K562 (cell line): ENCODE measurements at regions of chr6 and their contacts with region 1.

Region 1: GRCh38 chr6:37566111-37566949 is 66.6 kb upstream of the CCDC167 start:
- DNase-seq: peak; percentile 70 to 89 (median 87)
- ATAC-seq: peak; percentile 95
- H3K4me3 ChIP-seq: no peak overlapping the region
- H3K27ac ChIP-seq: no peak overlapping the region
- H3K4me1 ChIP-seq: peaks cover 0 to 15% of the 10 kb centered on the region in 2 experiments; a peak in 2 of 5 replicates
- H3K27me3 ChIP-seq: peaks cover 42 to 87% of the 10 kb centered on the region in 2 experiments
- CTCF ChIP-seq: peak; percentile 90 to 94 (median 93)
- EP300 ChIP-seq: no peak
- POLR2A ChIP-seq: no peak
- RAD21 ChIP-seq: peak; percentile 80 to 94

Region 2: DNA sequence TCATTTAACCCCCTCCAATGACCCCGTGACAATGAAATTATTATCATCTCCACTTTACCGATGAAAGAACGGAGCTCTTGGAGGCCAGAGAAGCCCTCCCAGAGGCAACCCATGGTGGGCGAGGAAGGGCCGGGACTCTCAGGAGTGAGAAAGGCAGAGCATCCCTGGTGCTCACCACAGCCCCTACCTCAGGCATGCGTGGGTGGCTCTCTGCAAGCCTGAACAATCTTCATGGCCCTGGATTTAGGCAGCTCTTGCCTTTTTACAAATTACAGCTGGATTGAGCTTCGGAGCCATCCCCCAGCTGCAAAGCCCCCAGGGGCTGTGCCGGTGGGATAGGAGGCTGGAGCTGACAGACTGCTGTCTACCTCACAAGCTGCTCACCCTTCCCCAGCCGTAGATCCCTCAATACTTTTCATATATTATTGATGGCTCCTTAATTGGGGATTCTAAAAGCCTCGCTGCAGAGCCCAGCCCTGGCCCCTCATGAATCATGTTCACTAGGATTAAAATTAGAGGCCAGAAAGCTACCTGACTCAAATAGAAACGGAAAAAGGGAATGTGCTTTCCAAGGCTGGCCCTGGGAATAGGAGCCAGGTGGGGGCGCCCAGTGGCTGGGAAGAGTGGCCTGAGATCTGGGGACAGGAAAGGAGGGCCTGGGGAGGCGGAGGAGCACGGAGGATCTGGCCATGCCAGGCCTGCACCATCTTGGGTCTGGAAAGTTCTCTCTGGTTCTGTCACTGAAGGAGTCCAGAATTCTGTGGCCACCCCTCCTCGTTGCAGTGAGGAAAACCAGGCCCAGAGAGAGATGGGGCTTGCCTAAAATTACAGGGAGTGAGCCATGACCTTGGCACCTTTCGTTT is 756.2 kb before region 1 on chr6:
- CTCF ChIA-PET with region 1: no interaction called
- POLR2A ChIA-PET with region 1: no interaction called
- in situ Hi-C with region 1: no loop called
- intact Hi-C with region 1: no loop called
- DNase-seq: peak in 1 of 4 experiments; percentile 42
- ATAC-seq: peak; percentile 51
- H3K4me3 ChIP-seq: no peak overlapping the region
- H3K27ac ChIP-seq: no peak overlapping the region
- H3K4me1 ChIP-seq: no peaks in the 10 kb centered on the region; a peak in 2 of 5 replicates
- H3K27me3 ChIP-seq: peaks cover 0 to 12% of the 10 kb centered on the region in 2 experiments; a peak in 3 of 5 replicates
- CTCF ChIP-seq: peak; percentile 35 to 78 (median 58); a peak in 4 of 6 replicates
- EP300 ChIP-seq: no peak
- POLR2A ChIP-seq: no peak
- RAD21 ChIP-seq: peak; percentile 80 to 91

Region 3: GRCh38 chr6:37285861-37286311 is 280.4 kb before region 1 on chr6:
- CTCF ChIA-PET with region 1: no interaction called
- POLR2A ChIA-PET with region 1: no interaction called
- in situ Hi-C with region 1: no loop called
- intact Hi-C with region 1: no loop called
- DNase-seq: no peak
- ATAC-seq: no peak
- H3K4me3 ChIP-seq: no peak overlapping the region
- H3K27ac ChIP-seq: no peak overlapping the region
- H3K4me1 ChIP-seq: peaks cover 0 to 4% of the 10 kb centered on the region in 2 experiments; a peak in 2 of 5 replicates
- H3K27me3 ChIP-seq: no peaks in the 10 kb centered on the region
- CTCF ChIP-seq: no peak
- EP300 ChIP-seq: no peak
- POLR2A ChIP-seq: no peak
- RAD21 ChIP-seq: no peak

Region 4: DNA sequence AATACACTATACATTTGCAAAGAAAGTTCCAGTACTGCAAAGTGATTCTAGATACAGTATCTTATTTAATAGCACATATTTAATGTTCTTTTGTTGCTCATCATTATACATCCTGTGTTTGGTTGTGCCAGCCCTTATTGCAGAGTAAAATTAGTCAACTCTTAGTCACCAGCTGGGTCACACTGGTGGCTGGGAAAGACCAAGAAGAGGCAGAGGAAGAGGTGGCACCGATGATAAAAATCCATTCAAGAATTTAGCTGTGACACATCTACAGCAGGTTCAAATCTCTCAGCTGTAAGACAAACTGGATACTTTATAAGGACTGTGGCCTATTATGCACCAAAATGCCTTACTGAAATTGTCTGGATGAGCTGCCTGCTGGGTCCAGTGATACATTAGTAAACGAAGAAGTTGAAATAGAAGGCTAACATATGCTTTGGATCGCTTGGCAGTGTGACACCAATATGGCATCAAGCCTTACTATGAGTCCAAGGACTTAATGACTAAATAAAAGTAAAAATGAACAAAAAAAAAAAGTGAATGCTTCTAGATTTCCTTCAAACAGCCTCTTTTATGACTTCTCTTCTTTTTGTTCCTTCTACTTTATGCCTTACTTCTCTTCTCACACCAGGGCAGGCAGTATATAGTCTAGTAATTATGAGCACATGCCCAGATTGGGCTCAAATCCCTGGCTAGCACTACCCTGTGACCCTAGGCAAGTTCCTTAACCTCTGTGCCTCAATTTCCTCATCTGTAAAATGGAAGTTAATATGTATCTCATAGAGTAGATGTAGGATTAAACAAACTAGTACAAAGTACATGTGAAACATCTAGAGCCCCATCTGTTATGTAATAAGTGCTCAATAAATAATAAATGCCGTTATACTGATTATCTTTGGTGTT is 241.9 kb before region 1 on chr6:
- CTCF ChIA-PET with region 1: interaction called, 6 read pairs
- POLR2A ChIA-PET with region 1: no interaction called
- in situ Hi-C with region 1: no loop called
- intact Hi-C with region 1: loop called (anchors 2 kb)
- DNase-seq: no peak
- ATAC-seq: no peak
- H3K4me3 ChIP-seq: no peak overlapping the region
- H3K27ac ChIP-seq: no peak overlapping the region
- H3K4me1 ChIP-seq: no peaks in the 10 kb centered on the region; a peak in 1 of 5 replicates
- H3K27me3 ChIP-seq: no peaks in the 10 kb centered on the region
- CTCF ChIP-seq: no peak
- EP300 ChIP-seq: no peak
- POLR2A ChIP-seq: no peak
- RAD21 ChIP-seq: no peak

Region 5: DNA sequence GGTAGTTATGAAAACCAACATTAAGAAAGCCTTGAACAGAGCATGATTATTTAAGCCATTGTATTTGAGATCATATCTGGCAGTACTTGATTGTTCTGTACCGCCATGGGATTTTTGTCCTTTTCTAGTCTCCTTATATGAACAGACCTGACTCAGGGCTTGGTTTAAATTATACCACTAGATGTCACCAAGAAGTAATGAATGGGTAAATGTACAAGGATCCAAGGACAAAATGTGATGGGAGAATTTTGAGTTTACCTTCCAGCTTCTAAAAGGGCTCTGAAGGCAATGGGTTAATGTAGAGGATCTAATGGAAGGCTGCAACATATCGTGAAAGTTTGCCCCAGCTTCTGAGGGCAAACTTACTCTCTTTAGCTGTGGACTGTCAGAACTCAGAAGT is 200.6 kb before region 1 on chr6:
- CTCF ChIA-PET with region 1: interaction called, 4 read pairs
- POLR2A ChIA-PET with region 1: no interaction called
- in situ Hi-C with region 1: no loop called
- intact Hi-C with region 1: loop called (anchors 2 kb)
- DNase-seq: peak in 1 of 4 experiments; percentile 38
- ATAC-seq: peak; percentile 78
- H3K4me3 ChIP-seq: no peak overlapping the region
- H3K27ac ChIP-seq: no peak overlapping the region
- H3K4me1 ChIP-seq: no peaks in the 10 kb centered on the region
- H3K27me3 ChIP-seq: no peaks in the 10 kb centered on the region
- CTCF ChIP-seq: peak; percentile 6 to 60 (median 32); a peak in 3 of 6 replicates
- EP300 ChIP-seq: no peak
- POLR2A ChIP-seq: no peak
- RAD21 ChIP-seq: peak; percentile 51 to 68; a peak in 3 of 4 replicates

Region 6: GRCh38 chr6:37483917-37484785 is 82.2 kb before region 1 on chr6:
- CTCF ChIA-PET with region 1: interaction called, 13 read pairs
- POLR2A ChIA-PET with region 1: interaction called, 4 read pairs
- in situ Hi-C with region 1: no loop called
- intact Hi-C with region 1: loop called (anchors 2 kb)
- DNase-seq: peak; percentile 73 to 88 (median 86)
- ATAC-seq: peak; percentile 91
- H3K4me3 ChIP-seq: no peak overlapping the region
- H3K27ac ChIP-seq: no peak overlapping the region
- H3K4me1 ChIP-seq: peaks cover 6 to 21% of the 10 kb centered on the region in 2 experiments; a peak in 4 of 5 replicates
- H3K27me3 ChIP-seq: no peaks in the 10 kb centered on the region
- CTCF ChIP-seq: peak; percentile 83 to 98 (median 96)
- EP300 ChIP-seq: no peak
- POLR2A ChIP-seq: no peak
- RAD21 ChIP-seq: peak; percentile 71 to 87

Region 7: DNA sequence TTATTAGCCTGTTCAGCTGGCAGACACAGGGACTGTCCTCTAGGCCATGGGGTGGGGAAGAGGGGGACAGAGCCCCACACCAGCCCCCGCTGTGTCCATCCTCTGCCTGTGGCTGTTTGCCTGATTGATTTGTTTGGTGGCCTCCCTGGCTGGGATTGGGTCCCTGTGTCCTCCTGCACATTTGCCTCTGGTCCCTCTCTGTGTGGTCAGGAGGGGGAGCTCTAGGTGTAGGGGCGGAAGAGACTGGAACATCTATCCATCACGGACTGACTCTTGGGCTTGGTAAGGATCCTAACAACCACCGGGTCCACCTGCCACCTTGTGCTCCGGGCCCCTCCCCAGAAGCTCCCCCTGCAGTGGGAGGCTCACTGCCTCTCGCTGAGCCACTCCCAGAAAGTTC is 28.2 kb before region 1 on chr6:
- CTCF ChIA-PET with region 1: interaction called, 4 read pairs
- POLR2A ChIA-PET with region 1: interaction called, 6 read pairs
- in situ Hi-C with region 1: no loop called
- intact Hi-C with region 1: loop called (anchors 2 kb)
- DNase-seq: peak; percentile 59 to 77 (median 62)
- ATAC-seq: peak; percentile 90
- H3K4me3 ChIP-seq: no peak overlapping the region
- H3K27ac ChIP-seq: no peak overlapping the region
- H3K4me1 ChIP-seq: peaks cover 2 to 20% of the 10 kb centered on the region in 2 experiments; a peak in 3 of 5 replicates
- H3K27me3 ChIP-seq: peaks cover 55 to 83% of the 10 kb centered on the region in 2 experiments
- CTCF ChIP-seq: peak; percentile 78 to 81 (median 80)
- EP300 ChIP-seq: no peak
- POLR2A ChIP-seq: no peak
- RAD21 ChIP-seq: peak; percentile 60 to 85

Region 8: DNA sequence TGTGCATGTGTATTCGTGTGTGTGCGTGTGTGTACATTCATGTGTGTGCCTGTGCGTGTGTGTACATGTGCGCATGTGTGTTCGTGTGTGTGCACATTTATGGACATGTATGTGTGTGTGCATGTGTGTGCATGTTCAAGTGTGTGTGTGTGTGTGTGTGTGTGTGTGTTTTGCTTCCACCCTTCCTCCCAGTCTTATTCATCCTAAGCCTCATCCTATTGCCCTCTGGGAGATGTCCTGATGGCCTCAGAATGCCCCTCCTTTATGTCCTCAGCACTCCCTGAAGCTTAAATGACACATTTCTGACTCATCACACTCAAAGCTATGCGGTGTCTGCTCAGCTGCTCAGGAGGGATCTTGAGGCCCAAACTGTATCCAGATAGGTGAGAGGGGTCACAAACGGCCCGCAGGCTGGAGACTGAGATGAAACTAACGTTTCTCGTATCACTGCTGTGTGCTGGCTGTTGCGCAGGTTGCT is 10.0 kb after region 1 on chr6:
- CTCF ChIA-PET with region 1: no interaction called
- POLR2A ChIA-PET with region 1: interaction called, 14 read pairs
- in situ Hi-C with region 1: no loop called
- intact Hi-C with region 1: no loop called
- DNase-seq: peak in 1 of 4 experiments; percentile 23
- ATAC-seq: no peak
- H3K4me3 ChIP-seq: no peak overlapping the region
- H3K27ac ChIP-seq: no peak overlapping the region
- H3K4me1 ChIP-seq: peaks cover 0 to 7% of the 10 kb centered on the region in 2 experiments; a peak in 2 of 5 replicates
- H3K27me3 ChIP-seq: peaks cover 49 to 64% of the 10 kb centered on the region in 2 experiments
- CTCF ChIP-seq: no peak
- EP300 ChIP-seq: no peak
- POLR2A ChIP-seq: no peak
- RAD21 ChIP-seq: no peak